CD8-positive, alpha-beta T cell (primary cell): ENCODE measurements at regions of chr3 and their contacts with region 1.

Region 1: GRCh38 chr3:50154840-50155474 is at the start of gene SEMA3F:
- DNase-seq: peak; percentile 22 to 87 (median 61)
- ATAC-seq: peak; percentile 89
- H3K4me3 ChIP-seq: peak within 1 kb of the TSS; percentile 8 to 39
- H3K4me3 Mint-ChIP-seq: peak within 1 kb of the TSS; percentile 82
- H3K27ac ChIP-seq: no peak within 1 kb of the TSS
- H3K27ac Mint-ChIP-seq: no peak within 1 kb of the TSS
- H3K4me1 ChIP-seq: peaks cover 9% of the 10 kb centered on the region
- H3K4me1 Mint-ChIP-seq: peaks cover 12% of the 10 kb centered on the region
- H3K27me3 ChIP-seq: peaks cover 9 to 22% of the 10 kb centered on the region in 2 experiments
- H3K27me3 Mint-ChIP-seq: peaks cover 31% of the 10 kb centered on the region
- CTCF ChIP-seq: no peak
- total RNA-seq, gene SEMA3F: 0.14 to 0.41 TPM

Region 2: DNA sequence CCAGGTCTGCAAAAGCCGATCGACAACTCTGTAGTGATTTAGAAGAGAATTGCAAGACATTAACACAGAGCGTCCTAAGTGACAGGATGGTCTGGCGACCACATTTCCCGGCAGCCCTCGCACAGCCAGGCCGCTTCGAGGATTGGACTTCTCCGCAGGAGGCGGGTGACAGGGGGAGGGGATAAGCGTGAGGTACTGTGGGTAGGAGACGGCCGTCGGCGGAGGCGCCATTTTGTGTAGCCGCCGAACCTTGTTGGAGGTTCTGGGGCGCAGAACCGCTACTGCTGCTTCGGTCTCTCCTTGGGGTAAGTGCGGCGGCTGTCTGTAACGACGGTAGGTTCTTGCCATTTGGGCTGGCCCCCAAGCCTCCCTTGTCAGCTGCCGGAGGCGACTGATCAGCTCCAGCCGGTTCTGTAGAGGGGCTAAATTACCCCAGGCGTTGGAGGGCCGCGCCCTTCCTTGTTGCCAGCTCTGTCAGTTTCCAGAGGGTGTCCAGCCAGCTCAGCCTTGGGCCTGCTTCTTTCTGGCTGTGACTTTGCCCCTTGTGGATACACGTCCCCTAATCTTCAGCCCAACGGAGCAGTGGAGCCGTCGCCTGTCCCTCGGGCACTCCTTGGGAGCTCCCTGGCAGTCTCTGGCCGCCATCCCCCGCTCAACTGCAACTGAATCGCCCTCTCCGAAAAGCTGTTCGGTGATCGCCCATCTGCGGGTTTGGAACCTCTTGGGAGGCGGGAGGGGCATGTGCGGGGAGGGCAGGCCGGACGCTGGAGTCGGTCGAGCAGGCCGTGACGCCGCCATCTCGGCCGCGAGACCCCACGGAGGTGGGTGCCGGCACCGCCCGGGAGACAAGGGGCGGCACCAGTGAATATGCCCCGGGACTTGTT is 66.0 kb before region 1 on chr3 and contains the start of gene RBM5:
- CTCF ChIA-PET with region 1: no interaction called
- POLR2A ChIA-PET with region 1: no interaction called
- intact Hi-C with region 1: loop called (anchors 1 to 2 kb)
- DNase-seq: peak; percentile 80 to 94 (median 92)
- ATAC-seq: peak; percentile 99
- H3K4me3 ChIP-seq: peak within 1 kb of the TSS; percentile 100
- H3K4me3 Mint-ChIP-seq: peak within 1 kb of the TSS; percentile 96
- H3K27ac ChIP-seq: peak within 1 kb of the TSS; percentile 97 to 99
- H3K27ac Mint-ChIP-seq: peak within 1 kb of the TSS; percentile 98
- H3K4me1 ChIP-seq: peaks cover 27% of the 10 kb centered on the region
- H3K4me1 Mint-ChIP-seq: peaks cover 34% of the 10 kb centered on the region
- H3K27me3 ChIP-seq: no peaks in the 10 kb centered on the region
- H3K27me3 Mint-ChIP-seq: no peaks in the 10 kb centered on the region
- CTCF ChIP-seq: no peak
- total RNA-seq, gene RBM5: 376 to 409 TPM

Region 3: DNA sequence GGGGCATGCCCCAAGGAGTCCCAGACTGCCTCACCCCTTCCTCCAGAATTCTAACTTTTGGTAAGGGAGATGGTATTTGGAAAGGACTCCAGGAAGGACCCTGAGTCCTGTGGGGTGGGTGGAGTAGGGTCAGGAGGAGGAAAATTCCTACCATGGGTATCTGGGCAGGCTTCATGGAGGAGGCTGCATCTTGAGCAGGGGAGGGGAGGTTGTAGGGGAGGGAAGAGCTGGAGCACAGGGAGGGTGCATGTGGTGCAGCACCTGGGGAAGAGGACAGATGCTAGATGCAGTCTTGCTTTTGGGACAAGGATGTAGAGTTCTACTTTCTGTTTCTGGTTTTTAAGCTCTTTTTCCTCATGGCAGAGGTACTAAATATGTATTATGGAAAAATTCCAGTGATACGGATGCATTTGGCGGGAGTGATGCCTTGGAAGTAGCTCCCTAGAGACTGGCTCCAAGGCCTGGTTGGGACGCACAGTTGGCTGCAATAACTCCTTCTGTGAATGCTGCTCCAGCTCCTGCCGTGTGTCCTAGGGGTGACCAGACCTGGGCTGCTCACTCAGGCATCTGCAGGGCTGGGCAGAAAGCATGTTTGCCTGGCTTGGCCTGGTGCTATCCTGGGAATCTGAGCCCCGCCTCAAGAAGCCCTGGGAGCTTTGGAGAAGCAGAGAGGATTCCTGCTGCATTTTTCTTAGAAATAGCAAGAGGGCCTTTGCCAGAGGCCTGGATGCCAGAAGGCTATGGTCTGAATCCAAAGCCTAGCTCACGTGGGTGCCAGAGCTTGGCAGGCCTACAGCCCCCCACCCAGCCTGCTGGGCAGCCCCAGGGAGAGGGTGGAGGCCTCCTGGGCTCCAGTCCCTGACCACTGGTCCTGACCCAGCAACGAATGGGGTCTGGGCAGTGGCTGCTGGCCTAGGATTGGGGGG is 10.3 kb after region 1 on chr3:
- CTCF ChIA-PET with region 1: no interaction called
- POLR2A ChIA-PET with region 1: no interaction called
- intact Hi-C with region 1: no loop called
- DNase-seq: no peak
- ATAC-seq: no peak
- H3K4me3 ChIP-seq: no peak overlapping the region
- H3K4me3 Mint-ChIP-seq: no peak overlapping the region
- H3K27ac ChIP-seq: no peak overlapping the region
- H3K27ac Mint-ChIP-seq: no peak overlapping the region
- H3K4me1 ChIP-seq: no peaks in the 10 kb centered on the region
- H3K4me1 Mint-ChIP-seq: no peaks in the 10 kb centered on the region
- H3K27me3 ChIP-seq: no peaks in the 10 kb centered on the region
- H3K27me3 Mint-ChIP-seq: no peaks in the 10 kb centered on the region
- CTCF ChIP-seq: no peak